ENCODE measurements at regions of chr2 and their contacts with region 1.

Region 1: GRCh38 chr2:102240640-102241370 is 54.0 kb downstream of the IL1RL2 start:
- DNase-seq: peak; percentile 97

Region 2: GRCh38 chr2:101883863-101884262 is 356.9 kb before region 1 on chr2:
- intact Hi-C with region 1: loop called in 1 of 2 experiments (anchors 10 kb)
- DNase-seq: no peak

Region 3: DNA sequence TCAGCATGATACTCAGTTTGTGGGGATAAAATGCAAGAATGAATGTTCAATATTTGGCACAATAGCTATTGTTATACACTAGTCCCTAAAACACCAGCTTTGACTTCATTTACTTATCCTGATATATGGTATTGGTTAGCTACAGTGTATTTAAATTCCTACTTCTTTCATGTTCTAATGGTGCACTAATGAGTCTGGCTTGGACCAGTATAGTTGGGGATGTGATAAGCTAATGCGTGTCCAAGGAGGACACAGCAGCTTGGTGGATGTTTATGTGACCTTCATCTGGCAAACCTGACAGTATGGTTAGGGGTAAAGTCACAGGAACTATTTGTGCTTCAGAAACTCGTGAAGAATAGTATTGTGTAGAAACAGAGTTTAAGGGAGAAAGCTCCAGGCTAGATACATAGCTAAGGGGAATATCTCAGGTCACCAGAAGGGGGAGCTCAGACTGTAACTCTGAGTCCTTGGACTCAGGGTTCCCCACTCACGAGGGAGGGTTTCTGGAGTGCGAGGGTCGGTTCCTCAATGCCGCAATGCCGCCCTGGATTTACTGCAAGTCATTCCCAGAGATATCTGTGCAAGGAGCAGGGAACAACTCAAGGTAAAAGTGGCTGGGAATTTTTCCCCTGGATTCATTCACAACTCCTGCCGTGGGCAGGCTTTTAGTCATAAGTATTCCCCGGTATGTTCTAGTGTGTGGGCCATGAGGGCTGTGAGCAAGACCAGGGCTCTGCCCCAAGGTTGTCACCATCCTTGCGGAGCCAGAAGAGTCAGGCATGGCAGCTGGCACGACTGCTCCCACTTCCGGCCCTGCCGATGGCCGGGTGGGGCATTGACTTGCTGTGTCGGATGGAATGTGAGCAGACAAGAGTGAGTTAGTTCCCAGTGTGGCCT is 234.6 kb before region 1 on chr2:
- intact Hi-C with region 1: loop called in 1 of 2 experiments (anchors 10 kb)
- DNase-seq: no peak

Region 4: GRCh38 chr2:102020596-102021181 is 220.1 kb before region 1 on chr2:
- intact Hi-C with region 1: loop called (anchors 2 kb)
- DNase-seq: peak; percentile 96

Region 5: GRCh38 chr2:102278720-102279390 is 38.0 kb after region 1 on chr2:
- intact Hi-C with region 1: no loop called
- DNase-seq: no peak

Measured in posterior vena cava (tissue), 2 donors.